ENCODE measurements at regions of chr4 and their contacts with region 1.

Region 1: DNA sequence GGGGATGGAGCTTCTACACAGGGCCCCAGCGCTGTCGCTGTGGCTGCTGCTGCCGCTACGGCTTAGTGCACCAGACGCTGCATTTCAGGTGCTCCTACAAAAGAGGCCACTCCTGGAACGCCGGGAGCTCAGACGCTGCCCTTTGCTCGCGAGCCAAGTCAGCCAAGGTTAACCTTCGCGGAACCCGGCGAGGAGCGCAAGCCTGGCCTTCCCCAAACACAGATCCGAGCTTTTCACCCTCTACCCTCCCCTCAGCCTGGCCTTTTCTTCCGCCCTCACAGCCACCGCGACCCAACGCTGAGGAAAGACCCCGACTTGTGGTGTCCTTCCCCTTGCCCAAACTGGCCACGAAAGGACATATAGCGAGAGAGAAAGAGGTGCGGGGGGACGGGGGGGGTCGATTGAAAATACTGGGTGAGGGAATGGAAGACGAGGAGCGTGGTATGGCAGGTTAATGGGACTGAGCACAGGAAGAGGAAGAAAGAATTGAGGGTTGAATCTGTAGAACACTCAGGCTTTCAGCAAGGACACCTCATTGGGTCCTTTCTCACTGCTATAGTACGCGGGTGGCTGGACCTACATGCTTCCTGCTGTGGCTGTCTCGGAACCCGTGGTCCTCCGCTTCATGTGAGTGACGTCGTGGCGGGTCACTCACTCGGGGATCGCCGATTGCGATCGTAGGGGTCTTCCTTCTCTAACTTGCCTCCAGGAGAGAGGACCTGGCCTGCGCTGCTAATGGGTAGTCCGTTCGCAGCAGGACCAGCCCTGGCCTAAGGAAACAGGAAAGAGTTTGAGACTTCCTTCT is at the starts of genes AIMP1 and TBCK:
- DNase-seq: peak; percentile 92
- H3K4me3 Mint-ChIP-seq: no peak within 1 kb of the TSS
- H3K27ac Mint-ChIP-seq: no peak within 1 kb of the TSS
- H3K4me1 Mint-ChIP-seq: peaks cover 44% of the 10 kb centered on the region
- H3K27me3 Mint-ChIP-seq: no peaks in the 10 kb centered on the region
- total RNA-seq, gene AIMP1: 59.2 to 60.1 TPM
- total RNA-seq, gene TBCK: 20.2 to 22.0 TPM

Region 2: GRCh38 chr4:105708530-105709391 is 607.4 kb before region 1 on chr4 and contains the starts of genes GSTCD and INTS12:
- CTCF ChIA-PET with region 1: no interaction called
- POLR2A ChIA-PET with region 1: no interaction called
- intact Hi-C with region 1: loop called (anchors 2 kb)
- DNase-seq: peak; percentile 93
- H3K4me3 Mint-ChIP-seq: peak within 1 kb of the TSS; percentile 98
- H3K27ac Mint-ChIP-seq: peak within 1 kb of the TSS; percentile 86
- H3K4me1 Mint-ChIP-seq: peaks cover 27% of the 10 kb centered on the region
- H3K27me3 Mint-ChIP-seq: no peaks in the 10 kb centered on the region
- total RNA-seq, gene GSTCD: 15.2 to 16.7 TPM
- total RNA-seq, gene INTS12: 19.6 to 22.7 TPM

Region 3: DNA sequence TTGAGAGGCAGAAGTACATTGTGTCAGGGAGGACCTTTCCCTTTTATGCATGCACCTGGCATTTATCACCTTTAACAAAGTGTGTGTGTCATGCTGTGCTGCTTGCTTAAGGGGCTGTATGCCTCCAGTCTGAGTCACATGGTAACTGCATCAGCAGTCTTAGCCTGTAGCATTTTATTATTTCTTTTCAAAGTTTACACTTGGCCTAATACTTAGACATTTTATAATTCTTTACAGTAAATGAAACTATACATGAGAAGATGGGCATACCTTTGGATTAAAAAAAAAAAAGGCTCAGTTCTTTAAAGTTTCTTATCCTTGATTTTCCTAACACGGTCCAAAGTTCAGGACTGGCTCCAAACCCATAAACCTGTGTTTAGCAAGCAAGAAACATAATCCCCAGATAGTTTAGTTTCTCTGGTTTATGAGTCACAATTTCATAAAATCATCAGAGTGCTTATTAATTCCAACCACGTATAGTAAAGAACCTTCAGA is 406.3 kb before region 1 on chr4:
- CTCF ChIA-PET with region 1: no interaction called
- POLR2A ChIA-PET with region 1: no interaction called
- intact Hi-C with region 1: no loop called
- DNase-seq: no peak
- H3K4me3 Mint-ChIP-seq: no peak overlapping the region
- H3K27ac Mint-ChIP-seq: no peak overlapping the region
- H3K4me1 Mint-ChIP-seq: no peaks in the 10 kb centered on the region
- H3K27me3 Mint-ChIP-seq: peaks cover 3% of the 10 kb centered on the region

Region 4: GRCh38 chr4:106266201-106266600 is 50.0 kb before region 1 on chr4:
- CTCF ChIA-PET with region 1: no interaction called
- POLR2A ChIA-PET with region 1: no interaction called
- intact Hi-C with region 1: no loop called
- DNase-seq: no peak
- H3K4me3 Mint-ChIP-seq: no peak overlapping the region
- H3K27ac Mint-ChIP-seq: no peak overlapping the region
- H3K4me1 Mint-ChIP-seq: peaks cover 3% of the 10 kb centered on the region
- H3K27me3 Mint-ChIP-seq: no peaks in the 10 kb centered on the region

Region 5: DNA sequence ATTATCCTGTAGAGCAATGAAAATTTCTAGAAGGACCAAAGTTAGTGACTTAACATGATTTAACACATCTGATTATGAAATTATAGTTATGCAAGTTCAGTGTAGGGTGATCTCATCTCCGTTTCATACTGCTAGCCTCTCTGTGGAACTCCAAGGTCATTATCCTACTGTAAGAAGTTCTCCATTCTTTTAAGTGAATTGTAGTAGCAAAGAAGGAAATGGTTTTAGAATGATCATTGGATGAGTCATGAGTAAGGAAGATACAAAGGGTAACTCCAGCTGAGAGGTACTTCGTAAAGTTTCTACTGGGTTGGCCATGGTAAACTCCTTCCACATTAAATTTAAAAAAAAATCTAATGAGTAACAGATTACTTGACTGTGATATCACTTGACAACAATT is 267.4 kb after region 1 on chr4:
- CTCF ChIA-PET with region 1: no interaction called
- POLR2A ChIA-PET with region 1: no interaction called
- intact Hi-C with region 1: no loop called
- DNase-seq: no peak
- H3K4me3 Mint-ChIP-seq: no peak overlapping the region
- H3K27ac Mint-ChIP-seq: no peak overlapping the region
- H3K4me1 Mint-ChIP-seq: no peaks in the 10 kb centered on the region
- H3K27me3 Mint-ChIP-seq: no peaks in the 10 kb centered on the region

Region 6: DNA sequence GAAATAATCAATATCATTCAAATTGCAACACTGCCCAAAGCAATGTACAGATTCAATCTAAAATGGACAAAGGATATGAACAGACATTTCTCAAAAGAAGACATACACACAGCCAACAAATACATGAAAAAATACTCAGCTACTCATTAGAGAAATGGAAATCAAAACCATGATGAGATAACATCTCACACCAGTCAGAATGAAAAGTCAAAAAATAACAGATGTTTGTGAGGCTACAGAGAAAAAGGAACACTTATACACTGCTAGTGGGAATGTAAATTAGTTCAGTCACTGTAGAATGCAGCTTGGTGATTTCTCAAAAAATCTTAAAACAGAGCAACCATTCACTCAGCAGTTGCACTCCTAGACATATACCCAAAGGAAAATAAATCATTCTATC is 514.7 kb after region 1 on chr4:
- CTCF ChIA-PET with region 1: no interaction called
- POLR2A ChIA-PET with region 1: no interaction called
- intact Hi-C with region 1: no loop called
- DNase-seq: no peak
- H3K4me3 Mint-ChIP-seq: no peak overlapping the region
- H3K27ac Mint-ChIP-seq: no peak overlapping the region
- H3K4me1 Mint-ChIP-seq: no peaks in the 10 kb centered on the region
- H3K27me3 Mint-ChIP-seq: no peaks in the 10 kb centered on the region